HCT116 (cell line): ENCODE measurements at regions of chr7 and their contacts with region 1.

Region 1: GRCh38 chr7:27921081-27921836 is 181.3 kb downstream of the TAX1BP1 start:
- DNase-seq: peak; percentile 71
- ATAC-seq: peak; percentile 84
- H3K4me3 ChIP-seq: no peak overlapping the region
- H3K27ac ChIP-seq: no peak overlapping the region
- H3K4me1 ChIP-seq: peaks cover 6 to 34% of the 10 kb centered on the region in 2 experiments; a peak in 2 of 4 replicates
- H3K27me3 ChIP-seq: no peaks in the 10 kb centered on the region
- CTCF ChIP-seq: peak; percentile 46 to 76 (median 69); a peak in 4 of 6 replicates
- POLR2A ChIP-seq: no peak
- RAD21 ChIP-seq: peak; percentile 88

Region 2: DNA sequence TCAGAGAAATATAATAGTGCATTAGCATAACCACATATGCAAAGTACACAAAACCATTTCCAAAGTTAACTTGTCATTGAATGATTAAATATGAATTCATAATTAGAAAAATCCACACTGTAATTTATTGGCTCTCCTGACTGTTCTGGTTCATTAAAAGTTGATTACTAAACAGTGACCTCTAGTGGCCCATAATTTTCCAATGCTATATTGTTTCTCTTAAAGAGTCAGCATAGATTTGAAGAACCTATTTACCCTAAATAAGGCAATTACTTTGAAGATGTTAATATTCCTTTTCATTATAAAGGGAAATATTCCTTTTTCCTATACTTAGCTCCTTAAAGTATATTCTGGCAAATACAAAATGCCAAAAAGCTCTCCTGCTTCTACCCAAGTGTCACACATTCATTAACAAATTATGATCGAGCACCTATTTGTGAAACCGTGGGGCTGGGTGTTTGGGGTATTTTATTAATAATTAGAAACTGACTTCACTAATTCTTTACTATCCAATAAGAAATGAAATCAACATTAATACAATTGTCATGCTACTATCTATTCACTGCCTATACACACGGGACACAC is 344.8 kb before region 1 on chr7:
- CTCF ChIA-PET with region 1: no interaction called
- POLR2A ChIA-PET with region 1: no interaction called
- RAD21 ChIA-PET with region 1: no interaction called
- intact Hi-C with region 1: loop called (anchors 10 kb)
- DNase-seq: peak; percentile 29
- ATAC-seq: peak; percentile 64
- H3K4me3 ChIP-seq: no peak overlapping the region
- H3K27ac ChIP-seq: no peak overlapping the region
- H3K4me1 ChIP-seq: no peaks in the 10 kb centered on the region
- H3K27me3 ChIP-seq: no peaks in the 10 kb centered on the region
- CTCF ChIP-seq: peak; percentile 37 to 75 (median 60); a peak in 4 of 6 replicates
- POLR2A ChIP-seq: no peak
- RAD21 ChIP-seq: peak; percentile 70

Region 3: GRCh38 chr7:27739909-27740448 is 181.3 kb before region 1 on chr7 and contains the start of gene TAX1BP1:
- CTCF ChIA-PET with region 1: interaction called, 11 read pairs
- POLR2A ChIA-PET with region 1: no interaction called
- RAD21 ChIA-PET with region 1: no interaction called
- intact Hi-C with region 1: loop called (anchors 1 kb)
- DNase-seq: peak; percentile 87
- ATAC-seq: peak; percentile 88
- H3K4me3 ChIP-seq: peak within 1 kb of the TSS; percentile 75 to 99
- H3K27ac ChIP-seq: peak within 1 kb of the TSS; percentile 73
- H3K4me1 ChIP-seq: peaks cover 11 to 18% of the 10 kb centered on the region in 2 experiments; a peak in 3 of 4 replicates
- H3K27me3 ChIP-seq: no peaks in the 10 kb centered on the region
- CTCF ChIP-seq: no peak
- POLR2A ChIP-seq: peak; percentile 94
- RAD21 ChIP-seq: no peak
- total RNA-seq, gene TAX1BP1: 68.1 TPM

Region 4: DNA sequence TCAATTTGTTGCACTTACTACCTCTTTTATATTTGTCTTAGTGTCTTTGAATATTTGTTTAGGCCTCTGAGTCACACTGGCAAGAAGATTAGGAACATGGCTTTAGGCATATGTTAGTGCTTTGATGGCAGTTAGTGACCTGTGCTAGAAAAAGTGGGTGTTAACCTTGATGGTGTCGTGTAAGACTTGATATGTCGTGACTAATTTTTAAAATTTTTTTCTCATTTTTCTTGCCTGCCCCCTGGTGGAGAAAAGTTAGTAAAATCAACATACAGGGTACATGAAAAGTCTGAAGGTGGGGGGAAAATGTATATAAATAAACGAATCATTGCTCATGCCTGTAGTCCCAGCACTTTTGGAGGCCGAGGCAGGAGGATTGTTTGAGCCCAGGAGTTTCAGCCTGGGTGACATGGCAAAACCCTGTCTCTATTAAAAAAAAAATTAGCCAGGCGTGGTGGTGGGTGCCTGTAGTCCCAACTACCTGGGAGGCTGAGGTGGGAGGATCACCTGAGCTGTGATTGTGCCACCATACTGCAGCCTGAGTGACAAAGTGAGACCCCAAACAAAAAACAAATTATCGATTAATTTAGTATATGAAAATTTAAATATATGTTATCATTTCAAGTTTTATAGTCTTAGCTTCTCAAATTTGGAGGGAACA is 136.7 kb before region 1 on chr7:
- CTCF ChIA-PET with region 1: interaction called, 3 read pairs
- POLR2A ChIA-PET with region 1: no interaction called
- RAD21 ChIA-PET with region 1: no interaction called
- intact Hi-C with region 1: loop called (anchors 5 kb)
- DNase-seq: peak; percentile 76
- ATAC-seq: peak; percentile 87
- H3K4me3 ChIP-seq: no peak overlapping the region
- H3K27ac ChIP-seq: no peak overlapping the region
- H3K4me1 ChIP-seq: peaks cover 4 to 13% of the 10 kb centered on the region in 2 experiments; a peak in 3 of 4 replicates
- H3K27me3 ChIP-seq: no peaks in the 10 kb centered on the region
- CTCF ChIP-seq: peak; percentile 53 to 74 (median 55); a peak in 5 of 6 replicates
- POLR2A ChIP-seq: no peak
- RAD21 ChIP-seq: peak; percentile 57

Region 5: GRCh38 chr7:28096713-28097112 is 175.5 kb after region 1 on chr7:
- CTCF ChIA-PET with region 1: interaction called, 4 read pairs
- POLR2A ChIA-PET with region 1: no interaction called
- RAD21 ChIA-PET with region 1: no interaction called
- intact Hi-C with region 1: loop called (anchors 10 kb)
- DNase-seq: peak; percentile 42
- ATAC-seq: peak; percentile 74
- H3K4me3 ChIP-seq: no peak overlapping the region
- H3K27ac ChIP-seq: no peak overlapping the region
- H3K4me1 ChIP-seq: no peaks in the 10 kb centered on the region
- H3K27me3 ChIP-seq: no peaks in the 10 kb centered on the region
- CTCF ChIP-seq: peak; percentile 49 to 91 (median 70); a peak in 5 of 6 replicates
- POLR2A ChIP-seq: no peak
- RAD21 ChIP-seq: peak; percentile 77

Region 6: DNA sequence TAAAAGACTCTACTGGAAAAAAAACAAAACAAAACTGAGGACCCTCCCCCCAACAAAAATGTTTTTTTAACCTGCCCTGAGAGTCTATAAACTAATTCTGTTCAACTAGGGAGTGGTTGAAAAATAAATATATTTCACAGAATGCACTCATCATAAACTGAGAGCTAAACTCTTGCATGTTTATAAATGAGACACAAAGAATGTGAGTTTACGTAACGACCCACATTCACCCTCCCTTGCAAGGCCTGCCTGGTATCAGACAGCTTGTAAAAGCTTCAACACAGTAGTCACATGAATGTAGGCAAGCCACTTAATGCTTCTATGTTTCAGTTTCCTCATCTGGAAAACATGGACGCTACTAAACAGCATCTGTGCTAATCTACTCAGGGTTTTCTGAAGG is 209.0 kb after region 1 on chr7:
- CTCF ChIA-PET with region 1: no interaction called
- POLR2A ChIA-PET with region 1: no interaction called
- RAD21 ChIA-PET with region 1: no interaction called
- intact Hi-C with region 1: no loop called
- DNase-seq: no peak
- ATAC-seq: no peak
- H3K4me3 ChIP-seq: no peak overlapping the region
- H3K27ac ChIP-seq: no peak overlapping the region
- H3K4me1 ChIP-seq: no peaks in the 10 kb centered on the region
- H3K27me3 ChIP-seq: no peaks in the 10 kb centered on the region
- CTCF ChIP-seq: no peak
- POLR2A ChIP-seq: no peak
- RAD21 ChIP-seq: no peak